CD4-positive, alpha-beta memory T cell (primary cell): ENCODE measurements at regions of chr17 and their contacts with region 1.

Region 1: GRCh38 chr17:58344047-58344790 is 7.8 kb downstream of the SUPT4H1 start:
- DNase-seq: peak; percentile 86 to 99 (median 90)
- H3K4me3 ChIP-seq: peak overlapping the region; percentile 59 to 99
- H3K4me3 Mint-ChIP-seq: peak overlapping the region; percentile 86 to 99 (median 90)
- H3K27ac ChIP-seq: peak overlapping the region; percentile 97
- H3K27ac Mint-ChIP-seq: peak overlapping the region; percentile 92 to 99 (median 94)
- H3K4me1 ChIP-seq: peaks cover 97% of the 10 kb centered on the region
- H3K4me1 Mint-ChIP-seq: peaks cover 55 to 98% (median 75%) of the 10 kb centered on the region in 4 donors
- H3K27me3 ChIP-seq: no peaks in the 10 kb centered on the region
- H3K27me3 Mint-ChIP-seq: no peaks in the 10 kb centered on the region

Region 2: GRCh38 chr17:58303971-58304725 is 40.1 kb before region 1 on chr17:
- CTCF ChIA-PET with region 1: interaction called, 31 read pairs
- POLR2A ChIA-PET with region 1: interaction called, 21 read pairs
- intact Hi-C with region 1: loop called (anchors 1 kb)
- DNase-seq: peak in 4 of 5 donors; percentile 59 to 65 (median 62)
- H3K4me3 ChIP-seq: no peak overlapping the region
- H3K4me3 Mint-ChIP-seq: no peak overlapping the region
- H3K27ac ChIP-seq: no peak overlapping the region
- H3K27ac Mint-ChIP-seq: peak overlapping the region in 4 of 7 donors; percentile 0 to 70 (median 44)
- H3K4me1 ChIP-seq: peaks cover 4% of the 10 kb centered on the region
- H3K4me1 Mint-ChIP-seq: peaks cover 4 to 10% (median 5%) of the 10 kb centered on the region in 4 donors
- H3K27me3 ChIP-seq: no peaks in the 10 kb centered on the region
- H3K27me3 Mint-ChIP-seq: no peaks in the 10 kb centered on the region

Region 3: DNA sequence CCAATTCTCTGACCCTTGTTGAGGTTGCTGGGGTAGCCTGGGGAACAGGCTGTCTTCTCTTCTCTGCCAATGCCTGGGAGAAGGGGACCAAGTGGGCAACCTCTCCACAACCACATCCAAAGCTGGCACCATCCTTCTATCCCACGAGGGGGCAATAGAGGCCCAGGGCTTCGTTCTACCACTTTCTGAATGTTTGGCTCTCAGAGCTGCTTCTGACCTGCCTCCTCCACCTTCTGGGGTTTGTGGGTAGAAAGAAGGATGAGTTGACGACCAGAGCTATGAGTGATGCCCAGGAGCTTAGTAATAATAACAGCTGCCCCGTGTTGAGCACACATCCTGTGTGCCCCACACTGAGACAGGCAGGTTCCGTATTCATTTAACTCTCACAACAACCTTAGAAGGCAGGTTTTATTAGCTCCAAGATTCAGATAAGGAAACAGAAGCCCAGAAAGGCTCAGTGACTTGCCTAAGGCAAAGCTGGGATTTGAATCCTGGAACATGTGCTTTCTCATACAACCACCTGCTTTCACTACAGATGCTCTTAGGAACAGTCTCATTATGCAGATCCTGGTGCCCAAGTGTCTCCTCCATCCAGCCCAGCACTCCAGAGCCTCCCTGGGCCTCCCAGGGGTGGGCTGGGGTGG is 26.7 kb before region 1 on chr17:
- CTCF ChIA-PET with region 1: interaction called, 510 read pairs
- POLR2A ChIA-PET with region 1: interaction called, 3,924 read pairs
- intact Hi-C with region 1: loop called (anchors 1 kb)
- DNase-seq: peak; percentile 80 to 84 (median 82)
- H3K4me3 ChIP-seq: peak overlapping the region in 1 of 2 donors; percentile 4
- H3K4me3 Mint-ChIP-seq: peak overlapping the region in 3 of 8 donors; percentile 18 to 48 (median 35)
- H3K27ac ChIP-seq: peak overlapping the region; percentile 31
- H3K27ac Mint-ChIP-seq: peak overlapping the region; percentile 80 to 95 (median 91)
- H3K4me1 ChIP-seq: peaks cover 18% of the 10 kb centered on the region
- H3K4me1 Mint-ChIP-seq: peaks cover 8 to 31% (median 14%) of the 10 kb centered on the region in 4 donors
- H3K27me3 ChIP-seq: no peaks in the 10 kb centered on the region
- H3K27me3 Mint-ChIP-seq: no peaks in the 10 kb centered on the region

Region 4: GRCh38 chr17:58329035-58329809 is 15.0 kb before region 1 on chr17:
- CTCF ChIA-PET with region 1: interaction called, 510 read pairs
- POLR2A ChIA-PET with region 1: interaction called, 3,924 read pairs
- intact Hi-C with region 1: loop called (anchors 1 kb)
- DNase-seq: peak; percentile 67 to 79 (median 73)
- H3K4me3 ChIP-seq: peak overlapping the region; percentile 82 to 99
- H3K4me3 Mint-ChIP-seq: peak overlapping the region; percentile 88 to 99 (median 98)
- H3K27ac ChIP-seq: peak overlapping the region; percentile 97
- H3K27ac Mint-ChIP-seq: peak overlapping the region; percentile 93 to 99 (median 97)
- H3K4me1 ChIP-seq: peaks cover 47% of the 10 kb centered on the region
- H3K4me1 Mint-ChIP-seq: peaks cover 25 to 72% (median 36%) of the 10 kb centered on the region in 4 donors
- H3K27me3 ChIP-seq: no peaks in the 10 kb centered on the region
- H3K27me3 Mint-ChIP-seq: no peaks in the 10 kb centered on the region

Region 5: GRCh38 chr17:58382108-58382871 is 38.1 kb after region 1 on chr17:
- CTCF ChIA-PET with region 1: no interaction called
- POLR2A ChIA-PET with region 1: interaction called, 10 read pairs
- intact Hi-C with region 1: no loop called
- DNase-seq: peak in 2 of 5 donors; percentile 10 to 12
- H3K4me3 ChIP-seq: no peak overlapping the region
- H3K4me3 Mint-ChIP-seq: peak overlapping the region; percentile 3 to 66 (median 58)
- H3K27ac ChIP-seq: no peak overlapping the region
- H3K27ac Mint-ChIP-seq: peak overlapping the region; percentile 3 to 83 (median 63)
- H3K4me1 ChIP-seq: peaks cover 44% of the 10 kb centered on the region
- H3K4me1 Mint-ChIP-seq: peaks cover 36 to 51% (median 38%) of the 10 kb centered on the region in 4 donors
- H3K27me3 ChIP-seq: no peaks in the 10 kb centered on the region
- H3K27me3 Mint-ChIP-seq: no peaks in the 10 kb centered on the region

Region 6: DNA sequence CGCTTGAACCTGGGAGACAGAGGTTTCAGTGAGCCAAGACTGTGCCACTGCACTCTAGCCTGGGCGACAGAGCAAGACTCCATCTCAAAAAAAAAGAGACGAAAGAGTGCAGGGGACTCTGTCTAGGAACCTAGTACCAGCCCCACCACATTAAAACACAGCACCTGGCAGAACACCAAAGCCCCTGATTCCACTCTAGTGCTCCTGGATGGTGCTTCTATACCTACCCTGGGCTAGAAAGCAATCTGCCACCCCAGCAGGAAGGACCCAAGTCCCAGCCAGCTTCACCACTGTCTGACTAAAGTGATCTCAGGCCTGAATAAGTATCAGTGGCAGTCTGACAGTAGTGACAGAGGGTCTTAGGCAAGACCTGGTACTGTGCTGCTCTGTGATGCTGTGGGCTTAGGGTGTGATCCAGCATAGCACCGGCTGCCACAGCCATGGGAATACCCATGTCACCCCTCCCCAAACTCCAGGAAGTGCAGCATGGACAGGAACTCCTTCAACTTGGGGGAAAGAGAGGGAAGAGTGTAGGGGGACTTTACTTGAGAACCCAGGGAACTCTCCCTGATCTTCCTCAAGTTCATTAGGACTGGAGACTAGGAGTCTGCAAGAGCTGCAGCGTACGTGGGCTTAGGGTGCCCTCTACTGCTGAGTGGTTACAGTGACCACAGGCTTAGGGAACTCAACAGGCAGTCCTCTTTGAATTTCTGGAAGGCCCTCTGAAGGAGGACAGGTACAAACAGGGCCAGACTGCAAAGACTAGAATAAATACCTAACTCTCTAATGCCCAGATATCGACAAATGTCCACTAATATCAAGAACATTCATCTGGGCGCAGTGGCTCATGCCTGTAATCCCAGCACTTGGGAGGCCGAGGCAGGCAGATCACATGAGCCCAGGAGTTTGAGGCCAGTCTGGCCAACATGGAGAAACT is 103.1 kb after region 1 on chr17:
- CTCF ChIA-PET with region 1: no interaction called
- POLR2A ChIA-PET with region 1: no interaction called
- intact Hi-C with region 1: loop called (anchors 1 kb)
- DNase-seq: peak; percentile 45 to 57 (median 49)
- H3K4me3 ChIP-seq: no peak overlapping the region
- H3K4me3 Mint-ChIP-seq: no peak overlapping the region
- H3K27ac ChIP-seq: no peak overlapping the region
- H3K27ac Mint-ChIP-seq: peak overlapping the region in 2 of 7 donors; percentile 26 to 38
- H3K4me1 ChIP-seq: no peaks in the 10 kb centered on the region
- H3K4me1 Mint-ChIP-seq: peaks cover 0 to 10% (median 7%) of the 10 kb centered on the region in 4 donors
- H3K27me3 ChIP-seq: no peaks in the 10 kb centered on the region
- H3K27me3 Mint-ChIP-seq: no peaks in the 10 kb centered on the region

Region 7: GRCh38 chr17:58487589-58488427 is 143.6 kb after region 1 on chr17 and contains the start of gene HSF5:
- CTCF ChIA-PET with region 1: interaction called, 5 read pairs
- POLR2A ChIA-PET with region 1: interaction called, 13 read pairs
- intact Hi-C with region 1: no loop called
- DNase-seq: peak; percentile 76 to 83 (median 82)
- H3K4me3 ChIP-seq: peak within 1 kb of the TSS; percentile 46 to 47
- H3K4me3 Mint-ChIP-seq: peak within 1 kb of the TSS; percentile 50 to 81 (median 70)
- H3K27ac ChIP-seq: peak within 1 kb of the TSS; percentile 20
- H3K27ac Mint-ChIP-seq: peak within 1 kb of the TSS in 5 of 7 donors; percentile 15 to 72 (median 47)
- H3K4me1 ChIP-seq: peaks cover 4% of the 10 kb centered on the region
- H3K4me1 Mint-ChIP-seq: peaks cover 5 to 15% (median 5%) of the 10 kb centered on the region in 4 donors
- H3K27me3 ChIP-seq: no peaks in the 10 kb centered on the region
- H3K27me3 Mint-ChIP-seq: no peaks in the 10 kb centered on the region
- total RNA-seq, gene HSF5: 2.1 to 2.4 TPM